ENCODE measurements at regions of chr2 and their contacts with region 1.

Region 1: GRCh38 chr2:64685438-64685837 is 31.7 kb upstream of the SERTAD2 start:
- DNase-seq: no peak
- H3K4me3 ChIP-seq: no peak overlapping the region
- CTCF ChIP-seq: no peak
- POLR2A ChIP-seq: no peak

Region 2: DNA sequence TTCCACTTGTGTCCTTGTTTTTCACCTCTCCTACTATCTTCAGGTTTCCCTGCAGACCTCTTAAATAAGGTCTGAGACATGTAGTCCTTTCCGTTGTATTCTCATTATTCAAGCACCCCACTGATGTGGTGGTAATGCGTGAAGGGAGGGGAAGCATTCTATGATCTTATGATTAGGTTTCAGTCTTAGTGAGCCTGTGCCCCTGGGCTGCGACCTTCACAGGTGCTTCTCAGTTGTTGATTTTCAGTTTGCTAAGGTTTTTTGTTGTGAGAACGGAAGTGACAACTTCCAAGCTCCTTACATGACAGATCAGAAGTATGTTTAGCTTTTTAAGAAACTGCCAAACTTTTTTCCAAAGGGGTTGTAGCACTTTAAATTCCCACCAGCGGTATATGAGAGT is 707.5 kb before region 1 on chr2:
- intact Hi-C with region 1: loop called (anchors 5 kb)
- DNase-seq: no peak
- H3K4me3 ChIP-seq: no peak overlapping the region
- CTCF ChIP-seq: no peak
- POLR2A ChIP-seq: no peak

Region 3: GRCh38 chr2:64904413-64905329 is 219.2 kb after region 1 on chr2:
- intact Hi-C with region 1: no loop called
- DNase-seq: peak in 1 of 2 donors; percentile 78
- H3K4me3 ChIP-seq: no peak overlapping the region
- CTCF ChIP-seq: no peak
- POLR2A ChIP-seq: no peak

Measured in lower leg skin (tissue), 4 donors.